ENCODE measurements at regions of chr6 and their contacts with region 1.

Region 1: DNA sequence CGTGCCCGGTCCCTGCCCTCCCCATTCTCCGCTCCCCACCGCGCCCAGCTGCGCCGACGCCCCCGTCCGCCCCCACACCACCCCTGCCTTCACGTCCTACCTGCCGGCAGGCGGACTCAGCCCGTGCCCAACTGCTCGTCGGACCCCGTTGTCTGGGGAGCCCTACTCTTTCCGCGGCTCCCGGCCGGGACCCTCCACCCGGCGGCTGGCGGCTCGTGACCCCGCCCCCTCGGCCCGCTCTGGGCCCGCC is at the start of gene SERAC1:
- DNase-seq: no peak
- ATAC-seq: peak; percentile 53
- H3K4me3 Mint-ChIP-seq: peak within 1 kb of the TSS; percentile 95
- H3K27ac Mint-ChIP-seq: peak within 1 kb of the TSS; percentile 99
- H3K4me1 Mint-ChIP-seq: peaks cover 14% of the 10 kb centered on the region
- H3K27me3 Mint-ChIP-seq: no peaks in the 10 kb centered on the region
- CTCF ChIP-seq: no peak
- total RNA-seq, gene SERAC1: 3.0 TPM in 2 replicates

Region 2: GRCh38 chr6:157981395-157982296 is 186.3 kb before region 1 on chr6 and contains the start of gene SYNJ2:
- CTCF ChIA-PET with region 1: interaction called, 3 read pairs
- POLR2A ChIA-PET with region 1: no interaction called
- intact Hi-C with region 1: loop called (anchors 5 kb)
- DNase-seq: peak; percentile 78
- ATAC-seq: peak; percentile 86
- H3K4me3 Mint-ChIP-seq: peak within 1 kb of the TSS; percentile 89
- H3K27ac Mint-ChIP-seq: peak within 1 kb of the TSS; percentile 77
- H3K4me1 Mint-ChIP-seq: peaks cover 43% of the 10 kb centered on the region
- H3K27me3 Mint-ChIP-seq: no peaks in the 10 kb centered on the region
- CTCF ChIP-seq: no peak
- total RNA-seq, gene SYNJ2: 20.7 and 25.0 TPM in 2 replicates

Region 3: DNA sequence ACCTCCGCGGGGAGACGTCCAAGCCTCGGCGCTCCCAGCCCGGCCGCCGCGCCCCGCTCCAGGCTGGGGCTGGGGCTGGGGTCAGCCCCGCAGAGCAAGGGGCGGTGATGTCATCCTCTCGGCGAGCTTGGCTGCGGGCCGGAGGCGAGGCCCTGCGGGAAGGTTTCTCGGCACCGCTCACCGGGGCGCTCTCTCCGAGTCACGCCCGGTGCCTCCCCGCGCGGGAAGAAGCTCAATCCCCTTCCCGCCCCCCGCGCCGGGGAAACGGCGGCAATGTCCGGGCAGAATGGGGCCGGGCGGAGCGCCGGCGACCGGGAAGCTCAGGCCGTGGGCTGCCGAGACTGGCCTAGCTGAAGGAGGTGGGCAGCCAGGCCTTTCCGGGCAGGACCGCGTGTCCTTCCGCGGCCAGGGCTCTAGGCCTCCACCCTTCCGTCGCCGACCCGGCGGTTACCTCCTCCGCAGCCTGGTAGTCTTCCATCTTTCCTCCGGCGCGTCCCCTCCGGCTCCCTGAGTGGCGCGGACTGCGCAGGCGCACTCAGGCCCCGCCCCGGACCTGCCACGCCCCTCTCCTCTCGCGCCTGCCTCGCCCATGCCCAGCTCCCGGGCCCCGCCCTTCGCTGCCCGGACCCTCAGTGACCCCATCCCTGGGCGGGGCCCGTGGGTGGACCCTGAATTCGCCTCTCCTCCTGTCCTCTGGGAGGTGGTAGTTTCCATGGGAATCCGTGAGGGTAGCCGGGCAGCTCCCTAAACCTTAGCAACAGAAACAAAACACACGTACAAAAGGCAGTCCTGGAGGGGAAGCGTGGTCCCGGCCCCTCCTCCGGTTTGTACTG is 476.5 kb after region 1 on chr6 and contains the start of gene DYNLT1:
- CTCF ChIA-PET with region 1: no interaction called
- POLR2A ChIA-PET with region 1: no interaction called
- intact Hi-C with region 1: loop called (anchors 5 kb)
- DNase-seq: peak; percentile 97
- ATAC-seq: peak; percentile 68
- H3K4me3 Mint-ChIP-seq: peak within 1 kb of the TSS; percentile 95
- H3K27ac Mint-ChIP-seq: peak within 1 kb of the TSS; percentile 85
- H3K4me1 Mint-ChIP-seq: peaks cover 52% of the 10 kb centered on the region
- H3K27me3 Mint-ChIP-seq: no peaks in the 10 kb centered on the region
- CTCF ChIP-seq: no peak
- total RNA-seq, gene DYNLT1: 37.7 and 43.9 TPM in 2 replicates